ENCODE measurements at regions of chr3 and their contacts with region 1.

Region 1: GRCh38 chr3:119293871-119294695 is at the start of gene ARHGAP31:
- DNase-seq: peak; percentile 94
- H3K4me3 Mint-ChIP-seq: peak within 1 kb of the TSS; percentile 82
- H3K27ac Mint-ChIP-seq: peak within 1 kb of the TSS; percentile 92
- H3K4me1 Mint-ChIP-seq: peaks cover 36% of the 10 kb centered on the region
- H3K27me3 Mint-ChIP-seq: no peaks in the 10 kb centered on the region
- total RNA-seq, gene ARHGAP31: 3.5 to 3.7 TPM

Region 2: GRCh38 chr3:119042164-119042563 is 251.9 kb before region 1 on chr3:
- CTCF ChIA-PET with region 1: no interaction called
- intact Hi-C with region 1: no loop called
- DNase-seq: no peak
- H3K4me3 Mint-ChIP-seq: no peak overlapping the region
- H3K27ac Mint-ChIP-seq: no peak overlapping the region
- H3K4me1 Mint-ChIP-seq: no peaks in the 10 kb centered on the region
- H3K27me3 Mint-ChIP-seq: peaks cover 14% of the 10 kb centered on the region

Region 3: DNA sequence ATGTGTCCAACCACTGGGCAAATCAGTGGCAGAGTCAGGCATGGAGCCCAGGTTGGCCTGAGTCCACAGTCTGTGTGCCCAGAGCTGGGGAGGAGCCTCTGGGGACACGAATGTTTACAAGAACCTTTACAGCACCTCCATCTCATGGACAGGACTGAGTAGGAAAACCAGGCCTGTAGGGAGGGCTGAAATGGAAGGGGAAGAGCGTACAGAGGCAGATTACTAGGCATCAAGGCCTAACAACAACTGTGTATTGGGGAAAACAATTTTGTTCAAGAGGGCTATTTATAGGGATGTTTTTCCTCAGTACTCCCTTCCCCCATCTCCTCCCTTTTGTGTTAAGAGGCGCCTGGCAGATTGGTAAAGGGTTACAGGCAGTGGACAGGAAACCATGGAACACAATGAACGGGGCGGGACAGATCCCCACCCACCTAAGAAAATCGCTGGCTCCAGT is 15.0 kb before region 1 on chr3:
- CTCF ChIA-PET with region 1: interaction called, 5 read pairs
- intact Hi-C with region 1: loop called (anchors 1 kb)
- DNase-seq: no peak
- H3K4me3 Mint-ChIP-seq: no peak overlapping the region
- H3K27ac Mint-ChIP-seq: no peak overlapping the region
- H3K4me1 Mint-ChIP-seq: peaks cover 19% of the 10 kb centered on the region
- H3K27me3 Mint-ChIP-seq: no peaks in the 10 kb centered on the region

Region 4: GRCh38 chr3:119322835-119323722 is 29.0 kb after region 1 on chr3:
- CTCF ChIA-PET with region 1: interaction called, 28 read pairs
- intact Hi-C with region 1: loop called (anchors 1 kb)
- DNase-seq: peak; percentile 96
- H3K4me3 Mint-ChIP-seq: peak overlapping the region; percentile 83
- H3K27ac Mint-ChIP-seq: peak overlapping the region; percentile 94
- H3K4me1 Mint-ChIP-seq: peaks cover 47% of the 10 kb centered on the region
- H3K27me3 Mint-ChIP-seq: no peaks in the 10 kb centered on the region

Region 5: DNA sequence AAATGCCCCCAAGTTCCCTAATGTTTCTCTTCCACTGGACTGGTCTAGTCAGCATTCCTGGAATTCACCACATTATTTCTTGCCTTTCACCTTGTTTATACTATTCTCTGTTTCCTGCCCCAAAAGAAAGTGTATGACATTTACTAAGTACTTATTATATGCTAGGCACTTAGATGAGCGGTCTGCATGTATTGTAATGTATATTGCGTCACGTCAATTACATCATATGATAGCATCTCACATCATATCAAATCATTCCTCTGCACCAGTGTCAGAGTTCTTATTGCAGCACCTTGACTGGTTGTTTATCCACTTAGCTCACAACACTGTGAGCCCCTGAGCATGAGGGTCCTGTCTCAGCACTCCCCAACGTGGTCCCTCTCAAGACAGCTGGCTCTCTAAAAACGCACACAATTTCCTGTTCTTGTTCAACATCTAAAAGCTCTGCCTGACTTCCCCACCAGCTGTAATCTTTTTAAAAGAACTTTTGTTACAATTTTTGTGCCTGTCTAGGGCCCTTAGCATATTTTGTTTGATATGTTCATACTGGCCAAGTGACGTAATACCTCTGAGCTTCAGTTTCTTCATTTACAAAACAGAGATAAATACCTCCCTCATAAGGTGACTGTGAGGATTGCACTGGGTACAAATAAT is 58.9 kb after region 1 on chr3:
- CTCF ChIA-PET with region 1: interaction called, 22 read pairs
- intact Hi-C with region 1: loop called (anchors 1 kb)
- DNase-seq: peak; percentile 13
- H3K4me3 Mint-ChIP-seq: no peak overlapping the region
- H3K27ac Mint-ChIP-seq: peak overlapping the region; percentile 43
- H3K4me1 Mint-ChIP-seq: peaks cover 30% of the 10 kb centered on the region
- H3K27me3 Mint-ChIP-seq: no peaks in the 10 kb centered on the region

Region 6: GRCh38 chr3:119420196-119420595 is 126.1 kb after region 1 on chr3:
- CTCF ChIA-PET with region 1: no interaction called
- intact Hi-C with region 1: no loop called
- DNase-seq: no peak
- H3K4me3 Mint-ChIP-seq: no peak overlapping the region
- H3K27ac Mint-ChIP-seq: no peak overlapping the region
- H3K4me1 Mint-ChIP-seq: no peaks in the 10 kb centered on the region
- H3K27me3 Mint-ChIP-seq: no peaks in the 10 kb centered on the region

Region 7: DNA sequence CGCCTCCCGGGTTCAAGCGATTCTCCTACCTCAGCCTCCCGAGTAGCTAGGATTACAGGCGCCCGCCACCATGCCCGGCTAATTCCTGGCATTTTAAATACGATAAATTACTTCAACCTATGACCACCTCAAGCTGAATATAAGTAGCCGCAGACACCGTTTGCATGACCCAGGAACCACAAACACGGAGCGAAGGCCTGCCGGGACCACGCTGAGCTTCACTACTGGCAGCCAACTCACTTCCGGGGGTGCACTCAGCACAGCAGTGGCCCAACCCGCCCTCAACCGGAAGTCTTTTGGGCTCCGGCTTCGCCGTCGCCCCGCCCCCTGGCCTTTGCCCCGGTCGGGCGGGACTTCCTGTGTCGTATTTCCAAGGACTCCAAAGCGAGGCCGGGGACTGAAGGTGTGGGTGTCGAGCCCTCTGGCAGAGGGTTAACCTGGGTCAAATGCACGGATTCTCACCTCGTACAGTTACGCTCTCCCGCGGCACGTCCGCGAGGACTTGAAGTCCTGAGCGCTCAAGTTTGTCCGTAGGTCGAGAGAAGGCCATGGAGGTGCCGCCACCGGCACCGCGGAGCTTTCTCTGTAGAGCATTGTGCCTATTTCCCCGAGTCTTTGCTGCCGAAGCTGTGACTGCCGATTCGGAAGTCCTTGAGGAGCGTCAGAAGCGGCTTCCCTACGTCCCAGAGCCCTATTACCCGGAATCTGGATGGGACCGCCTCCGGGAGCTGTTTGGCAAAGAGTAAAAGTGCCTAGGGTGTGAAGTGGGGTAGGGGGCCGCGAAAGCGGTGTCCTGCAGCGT is 204.3 kb after region 1 on chr3 and contains the start of gene TIMMDC1:
- CTCF ChIA-PET with region 1: no interaction called
- intact Hi-C with region 1: loop called (anchors 1 kb)
- DNase-seq: peak; percentile 98
- H3K4me3 Mint-ChIP-seq: peak within 1 kb of the TSS; percentile 99
- H3K27ac Mint-ChIP-seq: peak within 1 kb of the TSS; percentile 94
- H3K4me1 Mint-ChIP-seq: peaks cover 37% of the 10 kb centered on the region
- H3K27me3 Mint-ChIP-seq: no peaks in the 10 kb centered on the region
- total RNA-seq, gene TIMMDC1: 75.6 to 83.8 TPM

Region 8: DNA sequence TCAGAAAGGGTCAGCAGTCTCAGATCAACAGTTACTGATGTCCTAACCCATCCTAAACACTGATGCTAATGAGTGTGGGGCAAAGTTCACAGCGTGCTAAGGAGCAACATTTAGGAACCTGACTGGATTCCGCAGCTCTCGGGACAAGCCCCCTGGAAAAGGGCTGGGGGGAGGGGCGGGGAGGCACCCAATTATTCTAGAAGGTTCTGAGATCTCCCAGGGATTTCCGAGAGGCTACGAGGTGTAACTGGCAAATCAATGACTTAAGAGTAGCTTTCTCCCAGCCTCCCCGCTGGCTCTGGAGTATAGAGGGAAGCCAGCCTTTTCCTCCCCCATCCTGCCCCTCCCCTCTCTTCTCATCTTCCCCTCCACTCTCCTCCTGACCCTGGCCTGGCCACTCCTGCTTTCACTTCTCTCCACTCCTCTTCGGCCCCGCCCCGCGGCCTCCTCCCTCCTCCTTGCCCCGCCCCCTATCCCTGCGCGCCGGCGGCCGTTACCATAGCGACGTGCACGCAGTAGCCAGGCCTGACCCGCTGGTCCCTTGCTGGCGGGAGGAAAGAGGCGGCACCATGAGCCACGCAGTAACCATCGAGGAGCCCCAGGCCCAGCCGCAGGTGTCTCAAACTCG is 408.6 kb after region 1 on chr3 and contains the start of gene CFAP91:
- CTCF ChIA-PET with region 1: no interaction called
- intact Hi-C with region 1: loop called (anchors 1 kb)
- DNase-seq: peak; percentile 83
- H3K4me3 Mint-ChIP-seq: peak within 1 kb of the TSS; percentile 72
- H3K27ac Mint-ChIP-seq: no peak within 1 kb of the TSS
- H3K4me1 Mint-ChIP-seq: peaks cover 45% of the 10 kb centered on the region
- H3K27me3 Mint-ChIP-seq: peaks cover 2% of the 10 kb centered on the region
- total RNA-seq, gene CFAP91: 0.26 to 0.57 TPM

Region 9: GRCh38 chr3:120596116-120596852 is 1302.2 kb after region 1 on chr3 and contains the start of gene NDUFB4:
- CTCF ChIA-PET with region 1: no interaction called
- intact Hi-C with region 1: loop called (anchors 10 kb)
- DNase-seq: peak; percentile 97
- H3K4me3 Mint-ChIP-seq: peak within 1 kb of the TSS; percentile 86
- H3K27ac Mint-ChIP-seq: peak within 1 kb of the TSS; percentile 95
- H3K4me1 Mint-ChIP-seq: peaks cover 7% of the 10 kb centered on the region
- H3K27me3 Mint-ChIP-seq: no peaks in the 10 kb centered on the region
- total RNA-seq, gene NDUFB4: 146 to 152 TPM

Measured in activated naive CD4-positive, alpha-beta T cell treated with anti-CD3 and anti-CD28 coated beads for 36 hours (primary cell).